Activated CD4-positive, alpha-beta memory T cell treated with anti-CD3 and anti-CD28 coated beads, Interleukin-2, amount 10 ng/mL, durations not matched to agents 7 days and 5 days (primary cell): ENCODE measurements at regions of chr16 and their contacts with region 1.

Region 1: DNA sequence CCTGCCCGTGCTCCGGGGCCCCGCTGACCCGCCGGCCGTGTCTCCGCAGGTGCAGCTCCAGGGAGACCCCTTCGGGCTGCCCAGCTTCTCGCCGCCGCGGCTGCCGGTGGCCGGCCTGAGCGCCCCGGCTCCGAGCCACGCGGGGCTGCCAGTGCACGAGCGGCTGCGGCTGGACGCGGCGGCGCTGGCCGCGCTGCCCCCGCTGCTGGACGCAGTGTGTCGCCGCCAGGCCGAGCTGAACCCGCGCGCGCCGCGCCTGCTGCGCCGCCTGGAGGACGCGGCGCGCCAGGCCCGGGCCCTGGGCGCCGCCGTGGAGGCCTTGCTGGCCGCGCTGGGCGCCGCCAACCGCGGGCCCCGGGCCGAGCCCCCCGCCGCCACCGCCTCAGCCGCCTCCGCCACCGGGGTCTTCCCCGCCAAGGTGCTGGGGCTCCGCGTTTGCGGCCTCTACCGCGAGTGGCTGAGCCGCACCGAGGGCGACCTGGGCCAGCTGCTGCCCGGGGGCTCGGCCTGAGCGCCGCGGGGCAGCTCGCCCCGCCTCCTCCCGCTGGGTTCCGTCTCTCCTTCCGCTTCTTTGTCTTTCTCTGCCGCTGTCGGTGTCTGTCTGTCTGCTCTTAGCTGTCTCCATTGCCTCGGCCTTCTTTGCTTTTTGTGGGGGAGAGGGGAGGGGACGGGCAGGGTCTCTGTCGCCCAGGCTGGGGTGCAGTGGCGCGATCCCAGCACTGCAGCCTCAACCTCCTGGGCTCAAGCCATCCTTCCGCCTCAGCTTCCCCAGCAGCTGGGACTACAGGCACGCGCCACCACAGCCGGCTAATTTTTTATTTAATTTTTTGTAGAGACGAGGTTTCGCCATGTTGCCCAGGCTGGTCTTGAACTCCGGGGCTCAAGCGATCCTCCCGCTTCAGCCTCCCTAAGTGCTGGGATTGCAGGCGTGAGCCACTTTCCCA is 5.9 kb downstream of the CTF1 start:
- DNase-seq: peak; percentile 64
- H3K4me3 Mint-ChIP-seq: peak overlapping the region; percentile 91
- H3K27ac Mint-ChIP-seq: peak overlapping the region; percentile 94
- H3K4me1 Mint-ChIP-seq: peaks cover 44% of the 10 kb centered on the region
- H3K27me3 Mint-ChIP-seq: no peaks in the 10 kb centered on the region

Region 2: DNA sequence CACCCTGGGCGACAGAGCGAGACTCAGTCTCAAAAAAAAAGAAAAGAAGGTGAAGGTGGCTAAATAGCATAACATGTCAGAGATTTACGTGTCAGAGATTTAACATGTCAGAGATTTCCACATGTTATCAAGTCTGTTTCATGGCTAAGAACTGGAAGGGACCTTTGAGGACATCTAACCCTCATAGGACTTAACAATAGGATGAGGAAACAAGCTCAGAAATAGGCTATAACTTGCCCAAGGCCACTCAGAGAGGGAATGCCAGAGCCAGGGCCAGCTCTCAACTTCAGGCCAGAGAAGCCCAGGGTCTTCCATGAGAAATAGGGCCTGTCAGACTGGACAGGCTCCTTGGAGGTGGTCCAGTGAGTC is 88.5 kb before region 1 on chr16:
- CTCF ChIA-PET with region 1: interaction called, 27 read pairs
- POLR2A ChIA-PET with region 1: interaction called, 4 read pairs
- DNase-seq: no peak
- H3K4me3 Mint-ChIP-seq: peak overlapping the region; percentile 74
- H3K27ac Mint-ChIP-seq: peak overlapping the region; percentile 78
- H3K4me1 Mint-ChIP-seq: peaks cover 13% of the 10 kb centered on the region
- H3K27me3 Mint-ChIP-seq: no peaks in the 10 kb centered on the region

Region 3: DNA sequence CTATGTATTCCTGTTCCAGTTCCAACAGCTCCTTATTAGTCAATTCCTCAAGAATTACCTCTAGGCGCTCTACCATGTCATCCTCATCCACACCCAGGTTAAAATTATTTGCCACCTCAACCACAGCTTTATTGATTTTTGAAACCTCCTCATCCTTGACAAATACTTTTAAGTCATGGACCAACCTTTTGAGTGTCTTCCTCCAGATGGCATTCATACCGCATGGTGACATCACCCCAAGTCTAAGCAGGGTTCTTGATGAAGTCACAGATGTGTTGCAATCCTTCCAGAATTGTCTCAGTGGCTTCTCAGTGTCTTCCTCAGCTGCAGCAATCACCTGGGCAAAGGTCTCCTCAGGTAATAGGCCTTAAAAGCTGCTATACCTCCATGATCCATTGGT is 48.5 kb before region 1 on chr16:
- CTCF ChIA-PET with region 1: interaction called, 10 read pairs
- POLR2A ChIA-PET with region 1: no interaction called
- DNase-seq: no peak
- H3K4me3 Mint-ChIP-seq: no peak overlapping the region
- H3K27ac Mint-ChIP-seq: no peak overlapping the region
- H3K4me1 Mint-ChIP-seq: no peaks in the 10 kb centered on the region
- H3K27me3 Mint-ChIP-seq: no peaks in the 10 kb centered on the region

Region 4: GRCh38 chr16:30912794-30913412 is 10.6 kb after region 1 on chr16:
- CTCF ChIA-PET with region 1: interaction called, 10 read pairs
- POLR2A ChIA-PET with region 1: interaction called, 3 read pairs
- DNase-seq: no peak
- H3K4me3 Mint-ChIP-seq: no peak overlapping the region
- H3K27ac Mint-ChIP-seq: no peak overlapping the region
- H3K4me1 Mint-ChIP-seq: peaks cover 3% of the 10 kb centered on the region
- H3K27me3 Mint-ChIP-seq: no peaks in the 10 kb centered on the region